HepG2 (cell line): ENCODE measurements at regions of chr6 and their contacts with region 1.

Region 1: GRCh38 chr6:98927534-98927933 is 20.2 kb downstream of the FBXL4 start:
- DNase-seq: peak; percentile 31
- ATAC-seq: no peak
- H3K4me3 ChIP-seq: no peak overlapping the region
- H3K27ac ChIP-seq: no peak overlapping the region
- H3K4me1 ChIP-seq: no peaks in the 10 kb centered on the region
- H3K27me3 ChIP-seq: no peaks in the 10 kb centered on the region
- CTCF ChIP-seq: no peak
- EP300 ChIP-seq: no peak
- POLR2A ChIP-seq: no peak
- RAD21 ChIP-seq: no peak

Region 2: DNA sequence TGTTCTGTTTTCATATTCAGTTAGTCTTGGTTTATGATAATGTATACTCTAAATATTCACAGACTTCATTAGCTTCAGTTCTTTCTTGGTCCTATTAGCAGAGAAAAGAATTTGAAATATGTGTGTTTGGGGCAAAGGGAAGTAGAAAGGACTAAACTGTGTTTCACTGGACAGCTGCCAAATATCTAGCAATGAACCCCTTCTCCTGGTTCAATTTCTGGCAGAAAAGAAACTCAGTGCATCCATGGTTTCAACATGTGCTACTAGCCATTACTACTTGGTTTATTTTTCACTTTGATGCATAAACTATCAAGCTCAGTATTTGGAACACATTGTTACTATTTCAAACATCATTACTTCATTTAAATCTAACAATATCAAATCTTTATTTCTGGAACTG is 23.4 kb before region 1 on chr6:
- CTCF ChIA-PET with region 1: no interaction called
- POLR2A ChIA-PET with region 1: no interaction called
- in situ Hi-C with region 1: no loop called
- intact Hi-C with region 1: no loop called
- DNase-seq: no peak
- ATAC-seq: no peak
- H3K4me3 ChIP-seq: no peak overlapping the region
- H3K27ac ChIP-seq: no peak overlapping the region
- H3K4me1 ChIP-seq: no peaks in the 10 kb centered on the region
- H3K27me3 ChIP-seq: no peaks in the 10 kb centered on the region
- CTCF ChIP-seq: no peak
- EP300 ChIP-seq: no peak
- POLR2A ChIP-seq: no peak
- RAD21 ChIP-seq: no peak

Region 3: GRCh38 chr6:98975421-98975820 is 47.9 kb after region 1 on chr6:
- CTCF ChIA-PET with region 1: no interaction called
- POLR2A ChIA-PET with region 1: no interaction called
- in situ Hi-C with region 1: no loop called
- intact Hi-C with region 1: loop called (anchors 1 kb)
- DNase-seq: no peak
- ATAC-seq: no peak
- H3K4me3 ChIP-seq: no peak overlapping the region
- H3K27ac ChIP-seq: no peak overlapping the region
- H3K4me1 ChIP-seq: no peaks in the 10 kb centered on the region
- H3K27me3 ChIP-seq: no peaks in the 10 kb centered on the region
- CTCF ChIP-seq: no peak
- EP300 ChIP-seq: no peak
- POLR2A ChIP-seq: no peak
- RAD21 ChIP-seq: no peak

Region 4: DNA sequence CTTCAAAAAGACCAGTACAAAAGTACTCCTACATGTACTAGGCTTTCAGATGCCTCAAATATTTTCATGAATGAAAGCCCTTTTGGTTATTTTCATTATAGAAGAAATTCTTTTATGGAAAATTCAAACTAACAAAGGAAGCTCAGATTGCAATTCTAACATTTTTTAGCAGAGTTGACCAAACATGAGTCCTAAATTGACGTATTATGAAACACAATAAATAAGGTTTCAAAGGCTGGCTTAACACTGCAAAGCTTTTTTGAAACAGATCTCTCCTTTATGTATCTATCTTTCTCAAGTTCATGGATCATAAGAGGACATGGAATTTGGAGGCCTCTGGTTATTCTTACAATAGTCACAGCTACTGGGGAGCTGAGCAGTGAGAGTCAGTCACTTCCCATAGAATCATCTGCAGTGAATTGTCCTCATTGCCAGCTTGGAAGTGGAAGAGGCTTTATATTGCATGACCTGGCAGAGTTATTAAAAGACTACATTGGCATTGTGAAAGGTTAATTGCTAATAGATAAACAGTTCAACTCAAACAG is 58.6 kb after region 1 on chr6:
- CTCF ChIA-PET with region 1: no interaction called
- POLR2A ChIA-PET with region 1: no interaction called
- in situ Hi-C with region 1: no loop called
- intact Hi-C with region 1: no loop called
- DNase-seq: no peak
- ATAC-seq: no peak
- H3K4me3 ChIP-seq: no peak overlapping the region
- H3K27ac ChIP-seq: no peak overlapping the region
- H3K4me1 ChIP-seq: no peaks in the 10 kb centered on the region
- H3K27me3 ChIP-seq: 0 out of 5 replicates have a peak, but pooled peaks cover 0 to 4% of the 10 kb centered on the region in 2 experiments
- CTCF ChIP-seq: no peak
- EP300 ChIP-seq: no peak
- POLR2A ChIP-seq: no peak
- RAD21 ChIP-seq: no peak

Region 5: DNA sequence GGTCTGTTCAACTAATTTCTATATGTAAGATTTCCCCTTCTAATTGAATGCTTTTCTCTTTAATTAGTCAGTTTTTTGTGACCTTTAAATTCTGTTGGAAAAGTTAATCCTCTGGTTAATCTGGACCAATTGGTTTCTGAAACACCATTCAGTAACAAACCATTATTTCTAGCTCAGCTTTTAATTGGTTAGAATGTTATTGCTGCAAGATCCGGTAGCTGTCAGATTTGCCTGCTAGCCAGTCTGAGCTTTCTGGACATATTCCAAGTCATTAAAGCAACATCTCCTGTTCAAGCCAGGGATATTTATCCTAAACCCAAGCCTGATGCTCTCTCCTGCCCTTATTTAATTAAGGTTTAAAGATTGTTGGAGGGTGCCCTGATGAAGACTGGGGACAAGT is 75.3 kb after region 1 on chr6:
- CTCF ChIA-PET with region 1: no interaction called
- POLR2A ChIA-PET with region 1: no interaction called
- in situ Hi-C with region 1: no loop called
- intact Hi-C with region 1: no loop called
- DNase-seq: no peak
- ATAC-seq: no peak
- H3K4me3 ChIP-seq: no peak overlapping the region
- H3K27ac ChIP-seq: no peak overlapping the region
- H3K4me1 ChIP-seq: no peaks in the 10 kb centered on the region
- H3K27me3 ChIP-seq: no peaks in the 10 kb centered on the region
- CTCF ChIP-seq: no peak
- EP300 ChIP-seq: no peak
- POLR2A ChIP-seq: no peak
- RAD21 ChIP-seq: no peak